HepG2 (cell line): ENCODE measurements at regions of chr3 and their contacts with region 1.

Region 1: GRCh38 chr3:194333212-194333980 is 17.7 kb downstream of the CPN2 start:
- DNase-seq: peak; percentile 77
- ATAC-seq: peak; percentile 91
- H3K4me3 ChIP-seq: peak overlapping the region; percentile 22 to 61 (median 40); a peak in 5 of 6 replicates
- H3K27ac ChIP-seq: peak overlapping the region; percentile 87
- H3K4me1 ChIP-seq: peaks cover 53% of the 10 kb centered on the region
- H3K27me3 ChIP-seq: no peaks in the 10 kb centered on the region
- CTCF ChIP-seq: peak; percentile 99
- EP300 ChIP-seq: peak in 1 of 2 experiments; percentile 15; a peak in 1 of 4 replicates
- POLR2A ChIP-seq: peak in 1 of 2 experiments; percentile 29; a peak in 1 of 4 replicates
- RAD21 ChIP-seq: peak; percentile 98

Region 2: DNA sequence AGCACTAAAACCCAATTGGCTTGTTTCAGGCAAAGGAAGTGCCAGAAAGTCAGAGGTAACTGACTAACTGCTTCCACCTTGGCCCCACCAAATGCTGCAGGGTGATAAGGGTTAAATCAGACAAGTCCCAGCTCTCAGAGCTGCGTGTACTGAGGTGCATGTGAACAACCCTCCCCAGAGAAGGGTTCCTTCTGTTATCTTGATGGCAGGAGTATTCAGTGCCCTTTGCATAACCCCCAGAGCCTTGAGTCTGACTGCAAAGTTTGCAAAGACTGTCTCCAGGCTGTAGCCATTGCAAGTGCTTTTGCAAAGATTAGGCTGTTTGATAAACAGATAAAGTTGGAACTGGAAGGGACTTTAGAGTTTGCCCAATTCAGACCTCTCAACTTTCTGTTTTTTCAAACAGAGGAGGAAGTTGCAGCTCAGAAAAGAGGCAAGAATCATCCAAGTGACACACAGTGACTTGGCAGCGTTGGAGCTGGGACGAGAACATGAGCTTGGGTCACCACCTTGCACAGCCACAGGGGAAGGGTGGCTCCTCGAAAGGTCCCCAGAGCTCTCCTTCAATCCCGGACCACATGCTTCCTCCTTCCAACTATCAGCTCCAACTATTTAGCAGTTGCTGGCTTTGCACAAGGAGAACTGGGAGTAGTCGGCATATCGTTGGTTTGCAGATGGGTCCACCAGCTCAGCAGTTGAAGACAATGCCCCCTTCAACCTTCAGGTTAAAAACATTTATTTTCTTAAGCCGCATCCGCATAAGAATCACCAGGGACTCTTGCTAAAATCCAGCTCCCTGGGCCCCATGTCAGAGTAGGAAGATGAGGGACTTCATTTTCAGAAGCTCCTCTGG is 422.3 kb before region 1 on chr3:
- CTCF ChIA-PET with region 1: no interaction called
- POLR2A ChIA-PET with region 1: no interaction called
- in situ Hi-C with region 1: no loop called
- intact Hi-C with region 1: no loop called
- DNase-seq: no peak
- ATAC-seq: no peak
- H3K4me3 ChIP-seq: no peak overlapping the region
- H3K27ac ChIP-seq: no peak overlapping the region
- H3K4me1 ChIP-seq: peaks cover 9% of the 10 kb centered on the region; the same call in 1 of the 2 replicates
- H3K27me3 ChIP-seq: peaks cover 0 to 3% of the 10 kb centered on the region in 2 experiments; a peak in 2 of 5 replicates
- CTCF ChIP-seq: no peak
- EP300 ChIP-seq: no peak
- POLR2A ChIP-seq: no peak
- RAD21 ChIP-seq: no peak

Region 3: GRCh38 chr3:194364652-194365434 is 31.4 kb after region 1 on chr3:
- CTCF ChIA-PET with region 1: no interaction called
- POLR2A ChIA-PET with region 1: no interaction called
- in situ Hi-C with region 1: no loop called
- intact Hi-C with region 1: no loop called
- DNase-seq: no peak
- ATAC-seq: no peak; the same call in 2 of the 3 replicates
- H3K4me3 ChIP-seq: no peak overlapping the region
- H3K27ac ChIP-seq: no peak overlapping the region
- H3K4me1 ChIP-seq: peaks cover 13% of the 10 kb centered on the region
- H3K27me3 ChIP-seq: peaks cover 15 to 75% of the 10 kb centered on the region in 2 experiments; a peak in 4 of 5 replicates
- CTCF ChIP-seq: no peak
- EP300 ChIP-seq: no peak
- POLR2A ChIP-seq: no peak
- RAD21 ChIP-seq: no peak

Region 4: DNA sequence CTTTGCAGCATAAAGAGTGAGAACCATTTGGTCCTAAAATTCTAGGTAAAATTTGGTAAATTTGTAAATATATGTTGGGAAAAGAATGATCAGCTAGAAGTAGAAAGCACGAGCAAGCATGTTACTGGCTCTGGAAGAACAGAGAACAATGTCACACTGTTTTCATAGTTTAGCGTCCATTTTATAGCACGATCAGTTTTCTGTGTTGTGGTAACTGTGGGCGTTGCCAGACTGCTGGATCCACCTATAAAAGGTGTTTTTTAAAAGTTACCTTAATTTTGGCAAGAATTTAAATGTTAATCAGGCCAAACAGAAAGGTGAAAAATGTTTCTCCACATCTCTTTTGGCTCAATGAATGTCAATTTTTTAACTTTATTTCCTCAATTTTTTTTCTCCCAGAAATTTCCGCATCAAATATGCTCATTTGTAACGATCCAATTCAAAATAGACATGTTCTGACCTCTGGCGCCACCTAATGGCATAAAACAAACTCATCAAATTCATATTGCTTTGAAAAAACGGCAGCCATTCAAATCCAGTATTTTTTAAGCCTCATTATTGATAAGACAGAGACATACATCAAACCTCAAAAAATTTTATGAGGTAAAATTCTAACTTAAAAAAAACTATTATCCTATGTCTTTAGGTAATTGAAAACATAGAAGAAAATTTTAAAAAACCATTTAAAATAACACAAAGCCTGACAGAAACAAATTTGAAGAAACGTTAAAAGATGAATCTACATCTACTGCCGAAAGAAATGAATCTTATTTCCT is 71.2 kb after region 1 on chr3:
- CTCF ChIA-PET with region 1: interaction called, 42 read pairs
- POLR2A ChIA-PET with region 1: no interaction called
- in situ Hi-C with region 1: loop called (anchors 5 kb)
- intact Hi-C with region 1: loop called (anchors 1 kb)
- DNase-seq: peak; percentile 52
- ATAC-seq: no peak
- H3K4me3 ChIP-seq: no peak overlapping the region
- H3K27ac ChIP-seq: no peak overlapping the region
- H3K4me1 ChIP-seq: peaks cover 16% of the 10 kb centered on the region; the same call in 1 of the 2 replicates
- H3K27me3 ChIP-seq: no peaks in the 10 kb centered on the region
- CTCF ChIP-seq: peak; percentile 65
- EP300 ChIP-seq: no peak
- POLR2A ChIP-seq: no peak
- RAD21 ChIP-seq: peak; percentile 46; the same call in 1 of the 2 replicates

Region 5: GRCh38 chr3:194592798-194593752 is 259.7 kb after region 1 on chr3:
- CTCF ChIA-PET with region 1: interaction called, 5 read pairs
- POLR2A ChIA-PET with region 1: no interaction called
- in situ Hi-C with region 1: loop called (anchors 5 kb)
- intact Hi-C with region 1: loop called (anchors 5 kb)
- DNase-seq: no peak
- ATAC-seq: no peak
- H3K4me3 ChIP-seq: no peak overlapping the region
- H3K27ac ChIP-seq: no peak overlapping the region
- H3K4me1 ChIP-seq: no peaks in the 10 kb centered on the region
- H3K27me3 ChIP-seq: no peaks in the 10 kb centered on the region
- CTCF ChIP-seq: no peak
- EP300 ChIP-seq: no peak
- POLR2A ChIP-seq: no peak
- RAD21 ChIP-seq: no peak

Region 6: DNA sequence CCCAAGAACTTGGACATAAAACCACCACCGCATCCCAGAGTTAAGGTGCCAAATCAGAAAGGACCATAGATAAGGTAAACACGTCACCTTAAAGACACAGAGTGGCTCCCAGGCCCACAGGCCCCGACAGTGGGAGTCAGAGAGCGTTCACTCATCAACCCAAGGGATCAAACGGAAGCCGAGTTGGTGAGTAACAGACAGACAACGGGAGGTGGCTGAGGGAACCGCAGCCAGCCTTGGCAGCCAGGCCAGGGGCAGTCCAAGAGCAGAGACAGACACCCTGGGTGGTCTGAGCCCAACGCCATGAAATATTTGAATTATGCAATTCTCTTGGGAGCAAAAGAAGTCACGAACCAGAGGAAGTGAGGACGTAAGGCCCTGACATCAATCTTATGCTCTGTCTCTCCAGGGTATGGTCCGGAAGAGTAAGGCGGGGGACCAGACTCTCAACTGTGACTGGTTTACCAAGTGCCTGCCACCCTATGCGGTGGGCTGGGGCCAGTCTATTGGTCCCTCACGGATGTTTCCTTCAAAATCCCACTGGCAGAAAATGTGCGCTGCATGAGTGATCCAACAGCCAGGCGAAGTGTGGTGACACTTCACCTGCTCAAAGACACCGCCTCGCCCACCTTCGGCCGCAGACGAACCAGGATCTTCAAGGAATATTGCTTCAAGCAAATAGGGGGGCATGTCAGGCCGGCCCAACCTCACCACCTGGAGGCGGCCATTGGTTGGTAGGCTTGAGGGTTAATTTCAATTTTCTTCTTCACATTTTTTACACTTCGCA is 265.6 kb after region 1 on chr3:
- CTCF ChIA-PET with region 1: interaction called, 5 read pairs
- POLR2A ChIA-PET with region 1: no interaction called
- in situ Hi-C with region 1: loop called (anchors 5 kb)
- intact Hi-C with region 1: loop called (anchors 5 kb)
- DNase-seq: no peak
- ATAC-seq: no peak
- H3K4me3 ChIP-seq: no peak overlapping the region
- H3K27ac ChIP-seq: no peak overlapping the region
- H3K4me1 ChIP-seq: no peaks in the 10 kb centered on the region
- H3K27me3 ChIP-seq: no peaks in the 10 kb centered on the region
- CTCF ChIP-seq: no peak
- EP300 ChIP-seq: no peak
- POLR2A ChIP-seq: no peak
- RAD21 ChIP-seq: no peak